ENCODE measurements at regions of chr1 and their contacts with region 1.

Region 1: GRCh38 chr1:162497723-162498500 is at the start of gene UHMK1:
- DNase-seq: peak; percentile 76
- ATAC-seq: peak; percentile 95
- H3K4me3 Mint-ChIP-seq: peak within 1 kb of the TSS; percentile 88
- H3K27ac Mint-ChIP-seq: peak within 1 kb of the TSS; percentile 90
- H3K4me1 Mint-ChIP-seq: peaks cover 36% of the 10 kb centered on the region
- H3K27me3 Mint-ChIP-seq: no peaks in the 10 kb centered on the region
- CTCF ChIP-seq: no peak
- total RNA-seq, gene UHMK1: 60.7 and 65.6 TPM in 2 replicates

Region 2: DNA sequence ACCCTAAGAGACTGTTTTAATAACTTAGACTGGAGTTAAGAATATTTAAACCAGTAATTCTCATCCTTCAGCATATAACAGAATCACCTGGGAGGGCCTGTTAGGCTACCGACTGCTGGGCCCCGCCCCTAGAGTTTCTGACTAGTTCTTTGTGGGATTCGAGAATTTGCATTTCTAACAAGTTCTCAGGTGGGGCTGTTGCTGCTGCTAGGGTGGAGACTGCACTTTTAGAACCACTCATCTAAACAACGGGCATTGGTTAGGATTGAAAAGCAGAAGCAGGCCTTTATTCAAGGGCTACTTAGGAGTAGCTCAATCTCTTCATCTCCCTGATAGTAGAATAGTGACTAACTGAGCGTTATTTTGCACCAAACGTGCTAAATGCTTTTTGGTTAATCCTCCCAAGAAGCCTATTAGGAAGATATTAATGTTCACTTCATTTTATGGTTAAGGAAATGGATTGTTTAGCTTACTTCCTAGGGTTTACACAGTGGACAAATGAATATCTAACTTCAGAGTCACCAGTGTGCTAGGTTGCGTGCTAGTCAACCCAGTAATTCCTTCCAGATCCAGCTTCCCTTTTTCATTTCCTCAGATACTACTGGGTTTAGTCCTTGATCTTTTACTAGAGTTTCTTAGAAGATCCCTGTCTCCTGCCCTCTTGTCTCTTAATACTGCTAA is 32.5 kb after region 1 on chr1:
- CTCF ChIA-PET with region 1: no interaction called
- POLR2A ChIA-PET with region 1: interaction called, 4 read pairs
- intact Hi-C with region 1: loop called (anchors 2 kb)
- DNase-seq: no peak
- ATAC-seq: peak; percentile 93
- H3K4me3 Mint-ChIP-seq: no peak overlapping the region
- H3K27ac Mint-ChIP-seq: peak overlapping the region; percentile 77
- H3K4me1 Mint-ChIP-seq: peaks cover 22% of the 10 kb centered on the region
- H3K27me3 Mint-ChIP-seq: no peaks in the 10 kb centered on the region
- CTCF ChIP-seq: no peak

Region 3: DNA sequence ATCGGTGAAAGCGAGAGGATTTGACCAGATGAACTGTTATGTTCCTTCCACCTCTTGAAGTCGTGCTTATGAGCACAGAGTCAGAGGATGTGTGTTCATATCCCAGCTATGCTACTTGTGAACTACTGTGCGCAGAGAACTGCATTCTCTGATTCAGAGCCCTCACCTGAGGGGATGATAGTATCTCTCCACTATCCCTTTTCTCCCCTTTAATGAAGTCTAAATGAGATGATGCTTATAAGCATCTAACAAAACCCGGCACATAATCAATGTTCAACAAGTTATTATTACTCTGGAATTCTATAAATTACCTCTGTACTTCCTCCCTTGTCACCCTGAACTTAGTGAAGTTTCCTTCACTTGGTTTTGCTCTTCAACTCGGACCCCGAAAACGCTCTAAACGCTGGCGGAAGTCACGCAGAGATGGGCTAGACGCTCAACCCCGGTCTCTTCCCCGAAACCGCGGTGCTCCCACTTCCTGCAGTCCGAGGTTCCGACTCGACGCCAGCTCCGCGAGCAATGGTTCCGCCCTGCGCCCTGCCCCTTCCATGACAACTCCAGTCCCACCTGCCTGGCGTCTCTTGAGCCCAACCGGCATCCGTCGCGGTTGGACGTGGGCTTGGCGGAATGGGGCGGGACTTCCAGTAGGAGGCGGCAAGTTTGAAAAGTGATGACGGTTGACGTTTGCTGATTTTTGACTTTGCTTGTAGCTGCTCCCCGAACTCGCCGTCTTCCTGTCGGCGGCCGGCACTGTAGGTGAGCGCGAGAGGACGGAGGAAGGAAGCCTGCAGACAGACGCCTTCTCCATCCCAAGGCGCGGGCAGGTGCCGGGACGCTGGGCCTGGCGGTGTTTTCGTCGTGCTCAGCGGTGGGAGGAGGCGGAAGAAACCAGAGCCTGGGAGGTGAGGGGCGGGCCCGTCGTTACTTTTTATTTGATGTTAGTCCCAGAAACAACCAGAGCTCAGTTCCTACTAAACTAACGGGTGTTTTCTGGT is 823.7 kb after region 1 on chr1 and contains the start of gene NUF2:
- CTCF ChIA-PET with region 1: no interaction called
- POLR2A ChIA-PET with region 1: no interaction called
- intact Hi-C with region 1: loop called (anchors 5 kb)
- DNase-seq: peak; percentile 92
- ATAC-seq: peak; percentile 98
- H3K4me3 Mint-ChIP-seq: peak within 1 kb of the TSS; percentile 94
- H3K27ac Mint-ChIP-seq: peak within 1 kb of the TSS; percentile 91
- H3K4me1 Mint-ChIP-seq: peaks cover 24% of the 10 kb centered on the region
- H3K27me3 Mint-ChIP-seq: no peaks in the 10 kb centered on the region
- CTCF ChIP-seq: no peak
- total RNA-seq, gene NUF2: 1.1 and 1.2 TPM in 2 replicates

Measured in activated B cell treated with CpG ODN at 0.5 μM for 24 hours (primary cell).